K562 (cell line): ENCODE measurements at regions of chr1 and their contacts with region 1.

Region 1: GRCh38 chr1:164617377-164618201 is 58.6 kb downstream of the PBX1 start:
- DNase-seq: peak; percentile 29 to 34 (median 32)
- ATAC-seq: peak; percentile 83
- H3K4me3 ChIP-seq: no peak overlapping the region
- H3K27ac ChIP-seq: no peak overlapping the region
- H3K4me1 ChIP-seq: no peaks in the 10 kb centered on the region
- H3K27me3 ChIP-seq: no peaks in the 10 kb centered on the region; a peak in 1 of 5 replicates
- CTCF ChIP-seq: peak; percentile 48 to 63 (median 58)
- EP300 ChIP-seq: no peak
- POLR2A ChIP-seq: no peak
- RAD21 ChIP-seq: peak; percentile 51 to 66

Region 2: DNA sequence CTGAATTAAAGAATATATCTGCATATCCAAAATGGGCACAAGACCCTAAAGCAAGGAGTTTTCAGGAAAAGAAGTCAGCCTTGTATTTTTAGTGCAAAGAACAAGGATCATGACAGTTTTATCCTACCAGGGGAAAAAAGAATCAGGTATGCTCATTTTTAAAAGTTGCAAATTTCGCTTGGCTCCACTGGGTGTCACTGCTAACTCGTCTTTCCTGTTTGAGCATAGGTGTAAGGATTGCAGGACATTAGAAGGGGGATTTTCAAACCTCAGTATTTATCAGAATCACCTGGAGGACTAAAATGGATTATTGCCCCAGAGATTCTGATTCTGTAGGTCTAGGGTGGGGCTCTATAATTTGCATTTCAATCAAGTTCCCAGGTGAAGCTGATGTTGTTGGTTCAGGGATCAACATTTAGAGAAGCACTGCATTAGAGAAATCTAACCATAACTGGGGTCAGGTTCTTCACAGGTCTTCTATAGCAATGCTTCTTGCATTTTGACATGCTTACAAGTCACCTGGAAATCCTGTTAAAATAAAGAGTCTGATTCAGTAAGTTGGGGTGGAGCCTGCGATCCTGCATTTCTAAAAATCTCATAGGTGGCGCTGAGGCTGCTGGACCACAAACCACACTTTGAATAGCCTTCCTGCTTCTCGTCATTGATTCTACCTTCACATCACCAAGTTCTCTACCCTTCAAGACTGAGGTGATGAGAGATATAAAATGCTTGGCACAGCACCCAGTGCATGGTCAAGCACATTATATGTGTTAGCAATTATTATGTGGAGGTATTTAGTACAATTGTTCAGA is 1256.3 kb before region 1 on chr1:
- CTCF ChIA-PET with region 1: no interaction called
- POLR2A ChIA-PET with region 1: no interaction called
- in situ Hi-C with region 1: no loop called
- intact Hi-C with region 1: loop called (anchors 2 kb)
- DNase-seq: peak in 2 of 4 experiments; percentile 18 to 30
- ATAC-seq: peak; percentile 78
- H3K4me3 ChIP-seq: no peak overlapping the region
- H3K27ac ChIP-seq: no peak overlapping the region
- H3K4me1 ChIP-seq: no peaks in the 10 kb centered on the region
- H3K27me3 ChIP-seq: no peaks in the 10 kb centered on the region
- CTCF ChIP-seq: peak; percentile 50 to 63 (median 55); a peak in 5 of 6 replicates
- EP300 ChIP-seq: no peak
- POLR2A ChIP-seq: no peak
- RAD21 ChIP-seq: peak; percentile 56 to 67

Region 3: GRCh38 chr1:163410073-163410999 is 1207.3 kb before region 1 on chr1:
- CTCF ChIA-PET with region 1: no interaction called
- POLR2A ChIA-PET with region 1: no interaction called
- in situ Hi-C with region 1: loop called (anchors 10 kb)
- intact Hi-C with region 1: loop called (anchors 5 kb)
- DNase-seq: peak; percentile 30 to 72 (median 45)
- ATAC-seq: peak; percentile 74
- H3K4me3 ChIP-seq: no peak overlapping the region
- H3K27ac ChIP-seq: no peak overlapping the region
- H3K4me1 ChIP-seq: peaks cover 0 to 3% of the 10 kb centered on the region in 2 experiments; a peak in 1 of 5 replicates
- H3K27me3 ChIP-seq: no peaks in the 10 kb centered on the region; a peak in 1 of 5 replicates
- CTCF ChIP-seq: peak; percentile 57 to 85 (median 79)
- EP300 ChIP-seq: no peak
- POLR2A ChIP-seq: no peak
- RAD21 ChIP-seq: peak; percentile 72 to 85

Region 4: DNA sequence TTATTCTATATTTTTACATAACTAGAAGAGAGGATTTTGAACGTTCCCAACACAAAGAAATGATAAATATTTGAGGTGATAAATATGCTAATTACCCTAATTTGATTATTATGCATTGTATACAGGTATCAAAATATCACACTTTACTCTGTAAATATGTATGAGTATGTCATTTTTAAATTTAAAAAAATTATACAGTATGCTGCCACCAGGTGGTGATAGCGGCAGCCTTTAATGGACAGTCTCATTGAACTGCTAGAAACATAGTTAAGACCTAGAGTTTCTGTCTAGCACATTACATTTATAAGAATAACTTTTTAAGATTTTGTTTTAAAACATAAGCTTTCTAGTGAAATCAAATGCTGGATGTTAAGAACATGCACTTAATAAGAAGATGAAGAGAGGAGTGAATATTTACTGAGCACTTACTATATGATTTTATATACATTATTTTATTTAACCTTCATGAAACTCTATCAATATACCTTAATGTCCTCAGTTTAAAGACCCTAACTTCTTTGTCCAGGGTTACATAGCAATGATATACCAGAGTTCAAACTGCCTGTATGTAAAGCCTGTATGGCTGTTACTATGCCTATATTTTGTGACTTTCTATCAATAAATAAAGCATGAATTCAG is 1088.8 kb before region 1 on chr1:
- CTCF ChIA-PET with region 1: no interaction called
- POLR2A ChIA-PET with region 1: no interaction called
- in situ Hi-C with region 1: no loop called
- intact Hi-C with region 1: loop called (anchors 2 kb)
- DNase-seq: peak; percentile 13 to 37 (median 30)
- ATAC-seq: peak; percentile 78
- H3K4me3 ChIP-seq: no peak overlapping the region
- H3K27ac ChIP-seq: no peak overlapping the region
- H3K4me1 ChIP-seq: no peaks in the 10 kb centered on the region
- H3K27me3 ChIP-seq: no peaks in the 10 kb centered on the region
- CTCF ChIP-seq: peak; percentile 22 to 53 (median 28); a peak in 3 of 6 replicates
- EP300 ChIP-seq: no peak
- POLR2A ChIP-seq: no peak
- RAD21 ChIP-seq: peak; percentile 44 to 57

Region 5: DNA sequence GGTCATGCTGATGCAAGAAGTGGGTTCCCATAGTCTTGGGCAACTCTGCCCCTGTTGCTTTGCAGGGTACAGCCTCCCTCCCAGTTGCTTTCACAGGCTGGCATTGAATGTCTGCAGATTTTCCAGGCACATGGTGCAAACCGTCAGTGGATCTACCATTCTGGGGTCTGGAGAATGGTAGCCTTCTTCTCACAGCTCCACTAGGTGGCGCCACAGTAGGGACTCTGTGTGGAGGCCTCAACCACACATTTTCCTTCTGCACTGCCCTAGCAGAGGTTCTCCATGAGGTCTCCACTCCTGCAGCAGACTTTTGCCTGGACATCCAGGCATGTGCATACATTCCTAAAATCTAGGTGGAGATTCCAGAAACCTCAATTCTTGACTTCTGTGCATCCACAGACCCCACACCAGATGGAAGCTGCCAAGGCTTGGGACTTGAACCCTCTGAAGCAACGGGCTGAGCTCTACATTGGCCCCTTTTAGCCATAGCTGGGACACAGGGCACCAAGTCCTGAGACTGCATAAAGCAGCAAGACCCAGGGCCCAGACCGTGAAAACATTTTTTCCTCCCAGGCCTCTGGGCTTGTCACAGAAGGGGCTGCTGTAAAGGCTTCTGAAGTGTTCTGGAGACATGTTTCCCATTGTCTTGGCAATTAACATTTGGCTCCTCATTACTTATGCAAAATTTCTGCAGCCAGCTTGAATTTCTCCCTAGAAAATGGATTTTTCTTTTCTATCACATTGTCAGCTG is 524.8 kb before region 1 on chr1:
- CTCF ChIA-PET with region 1: no interaction called
- POLR2A ChIA-PET with region 1: no interaction called
- in situ Hi-C with region 1: no loop called
- intact Hi-C with region 1: loop called (anchors 10 kb)
- DNase-seq: peak in 1 of 4 experiments; percentile 20
- ATAC-seq: no peak
- H3K4me3 ChIP-seq: no peak overlapping the region
- H3K27ac ChIP-seq: no peak overlapping the region
- H3K4me1 ChIP-seq: no peaks in the 10 kb centered on the region
- H3K27me3 ChIP-seq: no peaks in the 10 kb centered on the region
- CTCF ChIP-seq: 0 out of 6 replicates have a peak, but pooled peaks of 2 of the 3 experiments have one; percentile 7 to 25
- EP300 ChIP-seq: no peak
- POLR2A ChIP-seq: no peak
- RAD21 ChIP-seq: no peak; a peak in 1 of 4 replicates

Region 6: DNA sequence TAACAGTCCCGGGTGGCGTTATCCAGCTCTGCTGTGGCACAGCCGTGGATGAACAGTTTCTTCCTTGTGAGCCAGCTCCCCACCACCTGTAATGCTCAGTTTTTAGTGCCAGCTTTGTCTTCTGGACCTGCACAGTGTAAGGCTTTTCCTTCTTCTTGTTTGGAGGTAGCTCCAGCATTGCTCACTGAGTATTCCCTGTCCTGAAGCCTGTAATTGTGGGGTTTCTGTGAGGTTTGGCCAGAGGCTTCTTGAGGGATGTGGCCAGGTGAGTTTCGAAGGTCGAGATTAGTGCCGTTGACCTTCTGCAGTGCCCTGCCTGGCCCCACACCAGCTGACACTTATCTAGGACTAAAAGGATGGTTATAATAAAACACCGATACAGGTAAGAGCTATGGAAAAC is 16.4 kb after region 1 on chr1:
- CTCF ChIA-PET with region 1: no interaction called
- POLR2A ChIA-PET with region 1: no interaction called
- in situ Hi-C with region 1: no loop called
- intact Hi-C with region 1: no loop called
- DNase-seq: no peak
- ATAC-seq: no peak
- H3K4me3 ChIP-seq: no peak overlapping the region
- H3K27ac ChIP-seq: no peak overlapping the region
- H3K4me1 ChIP-seq: no peaks in the 10 kb centered on the region
- H3K27me3 ChIP-seq: peaks cover 2 to 7% of the 10 kb centered on the region in 2 experiments; a peak in 2 of 5 replicates
- CTCF ChIP-seq: no peak
- EP300 ChIP-seq: no peak
- POLR2A ChIP-seq: no peak
- RAD21 ChIP-seq: no peak

Region 7: GRCh38 chr1:164644774-164645235 is 27.2 kb after region 1 on chr1:
- CTCF ChIA-PET with region 1: no interaction called
- POLR2A ChIA-PET with region 1: no interaction called
- in situ Hi-C with region 1: no loop called
- intact Hi-C with region 1: no loop called
- DNase-seq: no peak
- ATAC-seq: no peak
- H3K4me3 ChIP-seq: no peak overlapping the region
- H3K27ac ChIP-seq: no peak overlapping the region
- H3K4me1 ChIP-seq: no peaks in the 10 kb centered on the region
- H3K27me3 ChIP-seq: peaks cover 11 to 13% of the 10 kb centered on the region in 2 experiments; a peak in 3 of 5 replicates
- CTCF ChIP-seq: no peak
- EP300 ChIP-seq: no peak
- POLR2A ChIP-seq: no peak
- RAD21 ChIP-seq: no peak

Region 8: GRCh38 chr1:165073185-165074007 is 455.8 kb after region 1 on chr1:
- CTCF ChIA-PET with region 1: no interaction called
- POLR2A ChIA-PET with region 1: no interaction called
- in situ Hi-C with region 1: no loop called
- intact Hi-C with region 1: loop called (anchors 5 kb)
- DNase-seq: peak in 3 of 4 experiments; percentile 23 to 57 (median 49)
- ATAC-seq: peak; percentile 88
- H3K4me3 ChIP-seq: no peak overlapping the region
- H3K27ac ChIP-seq: no peak overlapping the region
- H3K4me1 ChIP-seq: no peaks in the 10 kb centered on the region
- H3K27me3 ChIP-seq: no peaks in the 10 kb centered on the region
- CTCF ChIP-seq: peak; percentile 60 to 70 (median 61)
- EP300 ChIP-seq: no peak
- POLR2A ChIP-seq: no peak
- RAD21 ChIP-seq: peak; percentile 72 to 78